Left ventricle myocardium inferior (tissue), 1 donor: ENCODE measurements at regions of chr1 and their contacts with region 1.

Region 1: GRCh38 chr1:42846257-42847110 is at the start of gene ZNF691:
- DNase-seq: peak; percentile 93
- H3K4me3 ChIP-seq: peak within 1 kb of the TSS; percentile 94
- H3K27ac ChIP-seq: peak within 1 kb of the TSS; percentile 92
- H3K4me1 ChIP-seq: peaks cover 34% of the 10 kb centered on the region
- H3K27me3 ChIP-seq: no peaks in the 10 kb centered on the region
- CTCF ChIP-seq: peak; percentile 60
- total RNA-seq, gene ZNF691: 8.9 TPM

Region 2: DNA sequence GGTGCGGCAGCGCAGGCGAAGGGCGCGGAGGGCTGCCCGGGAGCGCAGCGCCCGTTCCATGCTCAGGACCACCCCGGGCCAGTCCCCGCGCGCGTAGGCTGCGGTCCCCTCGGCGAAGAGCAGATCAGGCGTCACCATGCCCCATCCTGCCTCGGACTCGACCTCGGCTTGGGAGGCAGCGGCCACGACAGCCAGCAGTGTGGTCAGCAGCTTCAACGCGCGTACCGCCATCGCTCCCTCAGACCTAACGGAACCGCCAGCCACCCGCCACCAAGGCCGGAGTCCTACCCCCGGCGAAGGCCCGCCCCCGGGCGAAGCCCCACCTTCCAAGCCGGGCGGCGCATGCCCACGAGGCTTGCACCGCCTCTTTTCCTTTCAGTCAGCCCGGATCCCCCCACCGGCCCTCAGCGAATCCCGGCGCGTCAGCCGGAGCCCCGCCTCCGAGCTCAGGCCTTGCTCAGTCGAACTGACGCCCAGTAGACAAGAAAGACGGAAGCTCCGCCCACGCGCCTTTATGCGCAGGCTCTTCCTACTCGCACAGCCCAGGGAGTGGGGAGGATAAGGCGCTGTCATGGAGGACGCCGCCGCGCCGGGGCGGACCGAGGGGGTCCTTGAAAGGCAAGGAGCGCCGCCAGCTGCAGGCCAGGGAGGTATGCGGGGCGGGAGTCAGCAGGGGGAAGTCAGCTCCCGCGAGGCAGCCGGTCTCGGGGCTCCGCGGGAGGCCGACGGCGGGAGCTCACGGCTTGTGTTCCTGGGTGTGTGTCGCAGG is 79.6 kb before region 1 on chr1 and contains the starts of genes C1orf50 and P3H1:
- intact Hi-C with region 1: loop called (anchors 5 kb)
- DNase-seq: peak; percentile 100
- H3K4me3 ChIP-seq: peak within 1 kb of the TSS; percentile 87
- H3K27ac ChIP-seq: peak within 1 kb of the TSS; percentile 93
- H3K4me1 ChIP-seq: peaks cover 75% of the 10 kb centered on the region
- H3K27me3 ChIP-seq: no peaks in the 10 kb centered on the region
- CTCF ChIP-seq: no peak
- total RNA-seq, gene C1orf50: 7.8 TPM
- total RNA-seq, gene P3H1: 8.6 TPM